Gastrocnemius medialis (tissue), 4 donors: ENCODE measurements at regions of chr21 and their contacts with region 1.

Region 1: DNA sequence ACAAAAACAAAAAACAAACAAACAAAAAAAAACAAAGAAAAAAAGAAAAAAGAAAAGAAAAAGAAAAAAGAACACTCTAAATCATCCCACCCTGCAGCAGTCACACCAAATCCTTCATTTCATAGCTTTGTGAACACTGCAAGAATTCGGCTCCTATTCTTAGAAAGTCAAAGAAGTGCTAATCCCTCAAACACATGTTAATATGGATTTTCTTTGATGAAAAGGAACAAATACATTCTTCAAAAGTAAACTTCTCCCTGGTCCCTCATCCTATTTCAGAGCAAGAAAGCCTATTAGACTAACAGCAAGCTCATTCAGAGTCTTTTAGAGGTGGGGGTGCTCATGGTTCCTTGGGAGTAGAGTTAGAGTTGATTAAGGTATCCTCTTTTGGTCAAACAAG is 7.2 kb upstream of the MRPL39 start:
- DNase-seq: no peak
- ATAC-seq: no peak
- H3K4me3 ChIP-seq: no peak overlapping the region
- H3K27ac ChIP-seq: no peak overlapping the region
- H3K4me1 ChIP-seq: peaks cover 7 to 9% of the 10 kb centered on the region in 2 donors
- H3K27me3 ChIP-seq: no peaks in the 10 kb centered on the region
- CTCF ChIP-seq: no peak
- POLR2A ChIP-seq: no peak

Region 2: GRCh38 chr21:25298512-25299491 is 315.6 kb before region 1 on chr21:
- in situ Hi-C with region 1: no loop called
- intact Hi-C with region 1: no loop called
- DNase-seq: no peak
- ATAC-seq: no peak
- H3K4me3 ChIP-seq: no peak overlapping the region
- H3K27ac ChIP-seq: no peak overlapping the region
- H3K4me1 ChIP-seq: no peaks in the 10 kb centered on the region
- H3K27me3 ChIP-seq: no peaks in the 10 kb centered on the region
- CTCF ChIP-seq: no peak
- POLR2A ChIP-seq: no peak

Region 3: GRCh38 chr21:25664491-25664931 is 50.1 kb after region 1 on chr21:
- in situ Hi-C with region 1: no loop called
- intact Hi-C with region 1: no loop called
- DNase-seq: no peak
- ATAC-seq: no peak
- H3K4me3 ChIP-seq: no peak overlapping the region
- H3K27ac ChIP-seq: peak overlapping the region in 3 of 4 donors; percentile 37 to 54 (median 50)
- H3K4me1 ChIP-seq: no peaks in the 10 kb centered on the region
- H3K27me3 ChIP-seq: no peaks in the 10 kb centered on the region
- CTCF ChIP-seq: no peak
- POLR2A ChIP-seq: no peak

Region 4: GRCh38 chr21:25708467-25709065 is 94.1 kb after region 1 on chr21:
- in situ Hi-C with region 1: loop called in 3 of 4 experiments (anchors 5 kb)
- intact Hi-C with region 1: no loop called
- DNase-seq: no peak
- ATAC-seq: no peak
- H3K4me3 ChIP-seq: no peak overlapping the region
- H3K27ac ChIP-seq: no peak overlapping the region
- H3K4me1 ChIP-seq: no peaks in the 10 kb centered on the region
- H3K27me3 ChIP-seq: no peaks in the 10 kb centered on the region
- CTCF ChIP-seq: peak; percentile 49 to 79 (median 66)
- POLR2A ChIP-seq: no peak